ENCODE measurements at regions of chr9 and their contacts with region 1.

Region 1: GRCh38 chr9:124392871-124393460 is 22.3 kb downstream of the PSMB7 start:
- DNase-seq: no peak
- CTCF ChIP-seq: no peak

Region 2: GRCh38 chr9:124377551-124378406 is 15.2 kb before region 1 on chr9:
- CTCF ChIA-PET with region 1: interaction called, 14 read pairs
- POLR2A ChIA-PET with region 1: no interaction called
- DNase-seq: no peak
- CTCF ChIP-seq: no peak

Measured in GM10248 (cell line).